Posterior vena cava (tissue), 2 donors: ENCODE measurements at regions of chr2 and their contacts with region 1.

Region 1: DNA sequence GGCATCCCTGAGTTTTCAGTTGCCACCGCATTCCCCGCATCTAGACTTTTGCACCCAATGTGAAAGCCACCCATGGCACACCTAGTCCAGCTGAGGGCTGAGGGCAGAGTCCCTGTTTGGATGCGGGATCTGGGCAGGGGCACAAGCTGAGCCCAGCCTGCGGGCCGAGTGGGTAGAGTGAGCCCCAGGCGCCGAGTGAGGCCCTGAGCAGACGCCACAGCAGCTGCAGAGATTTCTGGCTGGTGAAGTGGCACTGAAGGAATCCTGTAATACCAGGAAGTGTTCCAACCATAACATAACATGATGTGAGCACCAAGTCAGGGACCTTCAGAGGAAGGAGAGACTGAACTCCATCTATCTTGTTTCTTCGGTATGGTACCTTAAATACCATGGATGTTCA is 27.7 kb upstream of the FRZB start:
- DNase-seq: no peak

Region 2: GRCh38 chr2:182910965-182911364 is 16.8 kb after region 1 on chr2:
- intact Hi-C with region 1: loop called in 1 of 2 experiments (anchors 1 kb)
- DNase-seq: no peak